ENCODE measurements at regions of chr7 and their contacts with region 1.

Region 1: DNA sequence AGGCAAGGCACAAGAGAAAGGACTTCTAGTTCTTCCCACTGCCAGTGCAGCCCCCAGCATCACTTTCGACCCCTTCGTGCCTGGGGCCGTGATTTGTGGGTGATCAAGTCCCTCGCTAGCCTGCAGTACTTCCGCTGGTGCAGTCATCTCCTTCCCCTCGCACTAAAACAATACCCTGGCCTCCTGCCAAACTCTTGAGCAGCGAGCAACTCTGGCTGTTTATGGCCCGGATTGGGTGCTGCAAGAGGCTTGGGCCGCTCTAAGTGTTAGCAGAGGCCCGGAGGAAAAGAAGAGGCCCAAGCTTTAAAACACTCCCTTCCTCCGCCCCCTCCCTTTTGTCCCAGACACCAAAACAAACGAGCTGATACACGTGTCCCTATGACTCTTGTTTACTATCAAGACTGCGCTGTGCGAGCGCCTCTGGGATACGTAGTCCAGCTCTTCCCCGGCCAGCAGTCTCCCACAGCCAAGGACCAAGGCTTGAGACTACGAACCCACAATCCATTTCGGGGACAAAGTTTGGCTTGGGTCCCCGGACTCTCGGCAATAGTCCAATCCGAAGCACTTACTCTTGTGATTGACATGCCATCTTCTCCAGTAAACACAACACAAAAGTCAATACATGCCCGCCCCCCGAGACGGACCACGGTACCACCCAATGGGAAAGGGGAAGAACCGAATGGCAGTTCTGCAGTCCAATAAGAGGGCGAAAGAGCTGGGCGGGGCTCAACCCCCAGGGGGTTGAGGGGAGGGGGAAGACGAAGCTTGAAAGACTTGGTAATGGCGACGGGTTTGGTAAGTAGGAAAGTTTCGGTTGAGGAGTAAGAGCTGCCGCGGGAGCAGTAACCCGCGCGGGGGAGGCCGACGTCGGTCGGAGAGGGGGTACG is at the start of gene HBP1:
- DNase-seq: peak; percentile 99
- H3K4me3 Mint-ChIP-seq: peak within 1 kb of the TSS; percentile 92
- H3K27ac Mint-ChIP-seq: peak within 1 kb of the TSS; percentile 98
- H3K4me1 Mint-ChIP-seq: peaks cover 26% of the 10 kb centered on the region
- H3K27me3 Mint-ChIP-seq: peaks cover 12% of the 10 kb centered on the region
- total RNA-seq, gene HBP1: 11.0 and 15.1 TPM in 2 replicates

Region 2: DNA sequence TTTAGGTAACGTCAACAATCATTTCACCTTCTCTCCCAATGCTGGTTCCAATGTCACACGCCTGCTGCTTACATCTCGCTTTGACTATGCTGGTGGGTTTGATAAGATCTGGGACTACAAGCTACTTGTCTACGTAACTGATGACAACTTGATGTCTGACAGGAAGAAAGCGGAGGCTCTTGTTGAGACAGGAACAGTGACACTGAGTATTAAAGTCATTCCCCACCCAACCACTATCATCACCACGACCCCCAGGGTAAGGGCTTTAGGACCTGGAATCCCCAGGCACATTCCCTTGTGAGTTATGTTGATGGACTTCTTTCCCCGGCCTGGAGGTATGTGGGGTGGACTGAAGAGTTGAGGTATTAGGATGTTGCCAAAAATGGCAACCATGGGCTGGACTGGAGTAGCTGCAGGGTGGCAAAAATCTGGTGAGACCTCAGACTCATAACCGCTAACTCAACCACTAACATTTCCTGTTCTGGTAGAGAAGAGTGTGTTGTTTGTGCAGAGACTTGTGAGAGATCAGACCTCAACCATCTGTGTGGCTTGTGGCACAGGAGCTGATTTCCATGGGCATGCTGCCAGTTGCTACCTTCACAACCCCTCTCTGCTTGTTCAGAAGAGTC is 1146.2 kb before region 1 on chr7:
- intact Hi-C with region 1: loop called (anchors 5 kb)
- DNase-seq: peak; percentile 88
- H3K4me3 Mint-ChIP-seq: peak overlapping the region; percentile 63
- H3K27ac Mint-ChIP-seq: peak overlapping the region; percentile 83
- H3K4me1 Mint-ChIP-seq: peaks cover 56% of the 10 kb centered on the region
- H3K27me3 Mint-ChIP-seq: peaks cover 5% of the 10 kb centered on the region

Region 3: DNA sequence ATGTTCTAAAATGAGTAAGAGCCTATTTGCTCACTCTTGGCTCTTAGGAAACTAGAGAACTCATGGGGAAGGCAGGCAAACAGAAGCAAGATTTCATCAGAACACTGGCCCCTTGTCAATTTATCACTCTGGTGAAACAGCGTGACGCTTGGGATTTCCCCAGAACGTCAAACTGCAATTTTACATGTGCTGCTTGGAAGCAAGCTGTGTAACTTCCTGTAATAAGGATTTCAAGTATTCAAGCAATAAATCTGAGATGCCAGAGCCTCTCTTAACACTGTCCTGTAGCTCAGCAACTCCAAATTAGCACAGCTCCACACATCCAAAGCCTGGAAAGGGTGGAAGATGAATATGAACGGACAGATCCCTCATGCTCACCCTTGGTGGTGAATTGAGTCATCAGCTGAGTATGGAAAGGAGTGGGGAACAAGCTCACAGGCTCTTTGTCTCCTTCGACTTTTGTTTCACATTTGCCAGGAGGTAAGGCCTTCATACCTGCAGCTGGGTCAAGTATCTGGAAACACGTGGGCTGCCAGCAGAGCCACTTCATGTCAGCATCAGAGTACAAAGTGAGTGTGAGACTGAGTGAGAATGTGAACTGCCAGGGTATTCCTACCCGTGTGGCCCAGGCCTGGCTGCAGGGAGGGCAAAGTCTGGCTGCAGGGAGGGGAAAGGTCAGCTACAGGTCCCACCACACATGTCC is 743.3 kb before region 1 on chr7:
- intact Hi-C with region 1: loop called (anchors 2 kb)
- DNase-seq: peak; percentile 88
- H3K4me3 Mint-ChIP-seq: peak overlapping the region; percentile 74
- H3K27ac Mint-ChIP-seq: peak overlapping the region; percentile 96
- H3K4me1 Mint-ChIP-seq: peaks cover 74% of the 10 kb centered on the region
- H3K27me3 Mint-ChIP-seq: no peaks in the 10 kb centered on the region

Region 4: GRCh38 chr7:106774768-106775551 is 393.5 kb before region 1 on chr7:
- intact Hi-C with region 1: loop called (anchors 1 kb)
- DNase-seq: no peak
- H3K4me3 Mint-ChIP-seq: no peak overlapping the region
- H3K27ac Mint-ChIP-seq: peak overlapping the region; percentile 45
- H3K4me1 Mint-ChIP-seq: peaks cover 28% of the 10 kb centered on the region
- H3K27me3 Mint-ChIP-seq: no peaks in the 10 kb centered on the region

Region 5: DNA sequence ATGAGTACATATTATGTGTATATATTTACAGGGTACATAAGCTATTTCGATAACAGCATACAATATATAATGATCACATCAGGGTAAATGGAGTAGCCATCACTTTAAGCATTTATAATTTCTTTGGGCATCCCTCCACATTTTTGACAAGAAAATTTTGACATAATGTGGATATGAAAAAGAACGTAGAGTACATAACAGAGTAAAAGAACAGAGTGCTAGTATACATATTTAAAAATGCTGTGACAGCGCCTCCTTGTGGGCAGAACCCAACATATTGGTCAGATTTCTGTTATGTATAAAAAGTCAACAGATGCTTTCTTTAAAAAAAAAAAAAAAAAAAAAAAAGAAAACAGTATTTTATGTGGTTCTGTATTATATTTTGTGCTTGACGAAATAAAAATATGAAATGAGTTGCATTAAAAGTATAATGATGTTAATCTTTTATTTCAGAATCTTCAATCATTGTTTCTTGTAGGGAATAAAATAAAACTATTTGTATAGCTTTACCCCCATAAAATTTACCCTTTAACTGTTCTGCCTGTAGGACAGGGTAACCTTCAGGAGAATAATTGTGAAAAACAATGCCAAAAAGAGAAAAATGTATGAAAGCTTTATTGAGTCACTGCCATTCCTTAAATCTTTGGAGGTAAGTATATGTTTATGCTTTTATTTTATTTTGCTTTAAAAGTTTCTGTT is 18.0 kb before region 1 on chr7:
- intact Hi-C with region 1: loop called (anchors 2 kb)
- DNase-seq: peak; percentile 91
- H3K4me3 Mint-ChIP-seq: no peak overlapping the region
- H3K27ac Mint-ChIP-seq: no peak overlapping the region
- H3K4me1 Mint-ChIP-seq: peaks cover 5% of the 10 kb centered on the region
- H3K27me3 Mint-ChIP-seq: peaks cover 7% of the 10 kb centered on the region

Region 6: GRCh38 chr7:107186242-107186641 is 17.8 kb after region 1 on chr7:
- intact Hi-C with region 1: no loop called
- DNase-seq: no peak
- H3K4me3 Mint-ChIP-seq: no peak overlapping the region
- H3K27ac Mint-ChIP-seq: no peak overlapping the region
- H3K4me1 Mint-ChIP-seq: no peaks in the 10 kb centered on the region
- H3K27me3 Mint-ChIP-seq: no peaks in the 10 kb centered on the region

Region 7: GRCh38 chr7:107661081-107661864 is 492.8 kb after region 1 on chr7:
- intact Hi-C with region 1: loop called (anchors 1 kb)
- DNase-seq: peak; percentile 90
- H3K4me3 Mint-ChIP-seq: peak overlapping the region; percentile 97
- H3K27ac Mint-ChIP-seq: peak overlapping the region; percentile 90
- H3K4me1 Mint-ChIP-seq: peaks cover 41% of the 10 kb centered on the region
- H3K27me3 Mint-ChIP-seq: no peaks in the 10 kb centered on the region

Region 8: DNA sequence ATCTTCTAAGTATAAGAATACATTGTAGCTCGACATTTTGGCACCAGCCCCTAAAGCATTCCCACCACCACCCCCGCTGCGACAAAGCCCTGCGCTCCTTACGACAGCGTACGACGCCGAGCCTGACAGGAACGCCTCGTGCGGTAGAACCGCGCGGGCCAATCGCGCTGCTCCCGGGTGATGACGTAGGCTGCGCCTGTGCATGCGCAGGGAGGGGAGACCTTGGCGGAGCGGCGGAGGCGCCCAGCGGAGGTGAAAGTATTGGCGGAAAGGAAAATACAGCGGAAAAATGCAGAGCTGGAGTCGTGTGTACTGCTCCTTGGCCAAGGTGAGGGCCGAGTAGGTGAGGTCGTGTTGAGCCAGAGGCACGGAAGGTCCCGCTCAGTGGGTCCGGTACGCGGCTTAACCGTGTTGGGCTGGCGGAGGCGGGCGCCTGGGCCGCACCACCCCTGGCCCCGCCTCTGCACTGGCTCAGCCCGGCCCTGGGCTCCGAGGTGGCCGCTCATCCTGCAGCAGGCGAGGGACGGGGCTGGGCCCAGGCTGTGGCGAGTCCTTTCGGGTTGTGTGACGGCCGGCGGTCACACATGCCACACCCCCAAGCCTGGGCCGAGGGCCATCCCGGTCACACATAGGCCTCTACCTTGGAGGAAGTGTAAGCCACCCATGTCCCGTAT is 722.6 kb after region 1 on chr7 and contains the start of gene DLD:
- intact Hi-C with region 1: loop called (anchors 1 kb)
- DNase-seq: peak; percentile 99
- H3K4me3 Mint-ChIP-seq: peak within 1 kb of the TSS; percentile 100
- H3K27ac Mint-ChIP-seq: peak within 1 kb of the TSS; percentile 99
- H3K4me1 Mint-ChIP-seq: peaks cover 41% of the 10 kb centered on the region
- H3K27me3 Mint-ChIP-seq: peaks cover 2% of the 10 kb centered on the region
- total RNA-seq, gene DLD: 113 and 119 TPM in 2 replicates

Measured in activated CD4-positive, alpha-beta T cell treated with anti-CD3 and anti-CD28 coated beads, Interleukin-2, amount 10 ng/mL, durations not matched to agents 24 days and 14 days (primary cell).